Heart left ventricle (tissue), 16 donors: ENCODE measurements at regions of chr10 and their contacts with region 1.

Region 1: DNA sequence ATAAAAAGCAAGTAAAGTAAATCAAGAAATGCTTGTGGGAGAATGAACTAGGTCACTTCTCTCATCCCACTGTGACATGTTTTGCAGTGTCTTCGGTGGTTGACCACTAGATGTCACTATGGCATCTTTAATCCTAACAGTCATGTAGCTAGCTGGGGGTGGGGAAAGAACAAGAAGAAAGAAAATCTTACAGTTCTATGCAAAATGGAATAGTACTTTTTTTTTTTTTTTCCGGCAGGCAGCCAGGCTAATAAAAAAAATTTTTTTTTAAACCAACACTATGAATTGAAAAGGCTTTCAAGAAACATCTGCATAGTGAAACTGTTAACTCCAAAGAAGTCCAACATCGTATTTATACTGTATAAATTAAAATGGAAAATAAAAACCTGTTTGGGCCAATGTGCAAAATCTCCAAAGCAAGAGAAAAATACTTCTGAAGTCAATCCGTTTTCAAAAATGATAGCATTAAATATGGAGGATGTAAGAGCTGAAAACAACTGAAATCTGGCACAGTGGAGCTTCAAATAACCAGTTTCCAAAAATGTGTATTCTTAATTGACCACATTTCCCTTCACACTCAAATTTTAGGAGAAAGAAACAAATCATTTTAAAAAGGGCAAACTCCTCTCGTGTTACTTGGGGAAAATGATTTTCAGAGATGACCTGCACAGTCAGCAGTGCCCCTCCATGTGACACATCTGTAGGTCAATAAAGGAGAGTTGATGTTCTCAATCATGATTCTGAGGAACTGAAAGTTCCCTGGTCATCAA is 38.5 kb downstream of the CDK1 start:
- DNase-seq: peak in 2 of 5 donors; percentile 46 to 69
- ATAC-seq: peak; percentile 91 to 93 (median 92)
- H3K4me3 ChIP-seq: peak overlapping the region in 4 of 12 donors; percentile 2 to 14 (median 7)
- H3K27ac ChIP-seq: peak overlapping the region in 5 of 12 donors; percentile 28 to 67 (median 37)
- H3K4me1 ChIP-seq: peaks cover 0 to 36% (median 11%) of the 10 kb centered on the region in 12 donors
- H3K27me3 ChIP-seq: no peaks in the 10 kb centered on the region
- CTCF ChIP-seq: peak; percentile 64 to 87 (median 82)
- POLR2A ChIP-seq: no peak

Region 2: DNA sequence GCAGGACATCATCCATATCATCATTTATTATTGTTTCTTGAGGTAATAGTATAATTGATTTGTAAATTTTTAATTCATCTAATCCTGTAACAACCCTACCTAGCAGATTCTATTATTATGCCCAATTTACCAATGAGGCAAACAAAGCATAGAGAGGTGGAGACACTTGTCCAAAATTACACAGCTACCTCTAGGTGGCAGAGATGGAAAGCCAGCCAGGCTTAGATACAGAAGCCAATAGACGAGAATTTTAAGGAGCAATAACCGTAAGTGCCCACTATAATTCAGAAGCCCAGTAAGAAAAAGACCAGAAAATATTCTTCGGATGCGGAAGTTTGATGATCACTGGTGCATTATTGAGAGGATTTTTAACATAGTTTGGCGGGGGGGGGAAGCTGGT is 481.1 kb before region 1 on chr10:
- intact Hi-C with region 1: no loop called
- DNase-seq: no peak
- ATAC-seq: no peak
- H3K4me3 ChIP-seq: no peak overlapping the region
- H3K27ac ChIP-seq: no peak overlapping the region
- H3K4me1 ChIP-seq: no peaks in the 10 kb centered on the region
- H3K27me3 ChIP-seq: no peaks in the 10 kb centered on the region
- CTCF ChIP-seq: peak in 1 of 12 donors; percentile 8
- POLR2A ChIP-seq: no peak

Region 3: GRCh38 chr10:60497364-60497763 is 319.4 kb before region 1 on chr10:
- intact Hi-C with region 1: no loop called
- DNase-seq: no peak
- ATAC-seq: no peak
- H3K4me3 ChIP-seq: no peak overlapping the region
- H3K27ac ChIP-seq: no peak overlapping the region
- H3K4me1 ChIP-seq: peaks cover 0 to 11% (median 0%) of the 10 kb centered on the region in 12 donors
- H3K27me3 ChIP-seq: no peaks in the 10 kb centered on the region
- CTCF ChIP-seq: no peak
- POLR2A ChIP-seq: no peak

Region 4: DNA sequence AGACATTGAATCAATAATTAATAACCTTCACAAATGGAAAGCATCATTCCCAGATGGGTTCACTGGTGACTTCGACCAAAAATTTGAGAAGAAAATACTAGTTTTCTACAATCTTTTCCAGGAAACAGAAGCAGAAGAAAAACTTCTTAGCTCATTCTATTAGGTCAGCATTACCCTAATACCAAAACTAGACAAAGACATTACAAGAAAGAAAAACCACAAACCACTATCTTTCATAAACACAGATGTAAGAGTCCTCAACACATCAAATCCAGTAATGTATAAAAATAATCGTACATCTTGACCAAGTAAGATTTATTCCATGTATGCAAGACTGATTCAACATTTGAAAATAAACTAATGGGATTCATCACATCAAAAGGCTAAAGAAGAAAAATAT is 102.6 kb before region 1 on chr10:
- intact Hi-C with region 1: no loop called
- DNase-seq: no peak
- ATAC-seq: no peak
- H3K4me3 ChIP-seq: no peak overlapping the region
- H3K27ac ChIP-seq: peak overlapping the region in 1 of 12 donors; percentile 53
- H3K4me1 ChIP-seq: no peaks in the 10 kb centered on the region
- H3K27me3 ChIP-seq: no peaks in the 10 kb centered on the region
- CTCF ChIP-seq: no peak
- POLR2A ChIP-seq: no peak

Region 5: DNA sequence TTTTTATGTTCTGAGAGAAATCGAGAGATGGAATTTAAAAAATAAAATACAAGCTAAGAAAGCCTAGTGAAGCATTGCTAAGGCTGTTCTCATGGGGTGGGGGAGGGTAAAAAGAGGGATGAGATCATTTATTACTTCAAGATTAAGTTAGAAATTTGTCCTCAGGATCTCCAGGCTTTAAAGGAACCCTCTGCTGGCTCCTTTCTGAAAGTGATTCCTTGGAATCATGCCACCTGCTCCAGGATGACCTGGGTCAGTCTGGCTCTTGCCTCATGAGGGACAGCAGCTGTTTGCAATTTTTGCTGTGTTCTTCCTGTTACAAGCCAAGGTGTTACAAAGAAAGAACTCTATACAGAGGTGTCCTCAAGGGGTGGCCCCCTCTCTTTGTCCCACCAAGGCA is 31.3 kb after region 1 on chr10:
- intact Hi-C with region 1: no loop called
- DNase-seq: peak in 4 of 5 donors; percentile 51 to 61 (median 54)
- ATAC-seq: peak; percentile 35 to 86 (median 73)
- H3K4me3 ChIP-seq: no peak overlapping the region
- H3K27ac ChIP-seq: peak overlapping the region in 9 of 12 donors; percentile 36 to 80 (median 59)
- H3K4me1 ChIP-seq: peaks cover 0 to 38% (median 17%) of the 10 kb centered on the region in 12 donors
- H3K27me3 ChIP-seq: no peaks in the 10 kb centered on the region
- CTCF ChIP-seq: peak in 4 of 12 donors; percentile 7 to 41 (median 24)
- POLR2A ChIP-seq: no peak

Region 6: DNA sequence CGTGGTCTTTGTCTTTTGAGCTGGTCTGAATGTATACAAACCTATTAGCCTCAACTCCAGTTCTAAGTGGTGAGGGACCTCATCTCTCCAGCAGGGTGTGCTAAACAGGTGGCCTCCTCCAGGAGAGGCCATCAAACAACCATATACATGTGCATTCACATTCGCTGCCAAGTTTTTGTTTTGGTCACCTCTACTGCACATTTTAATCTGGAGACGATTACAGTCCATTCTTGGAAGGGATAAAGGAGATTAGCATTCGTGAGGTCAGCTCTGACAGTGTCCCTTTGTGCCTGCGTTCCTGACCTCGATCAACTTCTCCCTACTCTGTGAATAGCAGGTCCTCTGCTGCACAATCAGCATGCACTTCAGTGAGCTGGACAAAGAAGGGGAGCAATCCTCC is 66.4 kb after region 1 on chr10:
- intact Hi-C with region 1: loop called in 1 of 10 experiments (anchors 5 kb)
- DNase-seq: peak in 3 of 5 donors; percentile 37 to 55 (median 44)
- ATAC-seq: peak; percentile 88 to 95 (median 92)
- H3K4me3 ChIP-seq: no peak overlapping the region
- H3K27ac ChIP-seq: peak overlapping the region in 8 of 12 donors; percentile 6 to 65 (median 48)
- H3K4me1 ChIP-seq: peaks cover 0 to 19% (median 8%) of the 10 kb centered on the region in 12 donors
- H3K27me3 ChIP-seq: no peaks in the 10 kb centered on the region
- CTCF ChIP-seq: peak; percentile 16 to 75 (median 54)
- POLR2A ChIP-seq: no peak

Region 7: GRCh38 chr10:60964257-60965235 is 147.7 kb after region 1 on chr10:
- intact Hi-C with region 1: loop called (anchors 1 to 5 kb)
- DNase-seq: peak; percentile 60 to 76 (median 63)
- ATAC-seq: peak; percentile 78 to 91 (median 82)
- H3K4me3 ChIP-seq: no peak overlapping the region
- H3K27ac ChIP-seq: peak overlapping the region in 10 of 12 donors; percentile 5 to 77 (median 38)
- H3K4me1 ChIP-seq: peaks cover 0 to 22% (median 8%) of the 10 kb centered on the region in 12 donors
- H3K27me3 ChIP-seq: no peaks in the 10 kb centered on the region
- CTCF ChIP-seq: peak; percentile 76 to 93 (median 84)
- POLR2A ChIP-seq: no peak

Region 8: DNA sequence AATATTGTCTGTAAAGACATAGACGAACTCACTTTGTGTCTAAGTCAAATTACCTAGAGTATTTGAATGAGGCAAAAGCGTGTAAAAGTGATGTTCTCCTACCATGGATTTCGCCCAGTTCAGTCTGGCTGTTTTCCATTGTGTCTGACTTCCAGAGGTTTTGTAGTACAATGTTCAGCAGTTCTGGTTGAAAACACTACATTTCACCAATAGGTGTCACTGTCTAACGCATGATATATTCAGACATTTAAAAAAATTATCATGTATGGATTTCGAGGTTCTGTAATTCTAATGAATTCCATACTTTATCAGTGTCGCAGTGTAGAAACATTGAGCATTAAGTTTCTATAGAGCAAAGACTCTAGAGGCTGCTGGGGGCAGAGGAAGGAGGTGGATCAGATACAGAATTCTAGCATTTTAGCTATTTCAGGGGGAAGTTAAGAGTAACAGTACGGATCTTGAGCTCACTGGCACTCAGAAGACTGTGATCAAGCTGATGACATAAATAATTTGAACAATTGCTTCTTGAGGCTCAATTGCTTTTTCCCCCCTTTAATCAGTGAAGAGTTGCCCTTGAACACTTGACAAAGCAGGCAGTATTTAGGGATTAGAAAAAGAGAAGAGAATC is 324.1 kb after region 1 on chr10:
- intact Hi-C with region 1: loop called in 3 of 10 experiments (anchors 2 to 10 kb)
- DNase-seq: peak in 2 of 5 donors; percentile 28 to 33
- ATAC-seq: peak; percentile 37 to 75 (median 66)
- H3K4me3 ChIP-seq: no peak overlapping the region
- H3K27ac ChIP-seq: no peak overlapping the region
- H3K4me1 ChIP-seq: peaks cover 0 to 18% (median 2%) of the 10 kb centered on the region in 12 donors
- H3K27me3 ChIP-seq: no peaks in the 10 kb centered on the region
- CTCF ChIP-seq: peak; percentile 59 to 83 (median 76)
- POLR2A ChIP-seq: no peak

Region 9: DNA sequence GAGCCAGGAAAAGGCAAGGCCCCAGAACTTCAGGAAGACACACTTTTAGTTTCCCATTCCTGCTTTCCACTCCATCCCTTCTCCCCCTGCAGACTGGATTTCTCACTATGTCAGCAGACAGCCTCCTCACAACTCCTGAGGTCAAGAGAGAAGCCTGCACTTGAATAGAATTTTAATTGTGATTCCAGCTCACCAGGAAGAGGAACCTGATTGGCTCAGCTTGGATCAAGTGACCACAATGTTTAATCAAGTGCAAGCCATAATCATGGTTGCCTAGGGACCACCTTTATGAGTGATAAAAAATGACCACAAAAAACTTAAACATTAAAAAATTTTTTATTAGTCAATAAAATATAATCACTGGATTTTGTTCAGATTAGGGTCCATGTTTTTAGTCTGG is 371.9 kb after region 1 on chr10:
- intact Hi-C with region 1: loop called in 2 of 10 experiments (anchors 5 kb)
- DNase-seq: no peak
- ATAC-seq: no peak
- H3K4me3 ChIP-seq: no peak overlapping the region
- H3K27ac ChIP-seq: no peak overlapping the region
- H3K4me1 ChIP-seq: peaks cover 0 to 9% (median 0%) of the 10 kb centered on the region in 12 donors
- H3K27me3 ChIP-seq: no peaks in the 10 kb centered on the region
- CTCF ChIP-seq: no peak
- POLR2A ChIP-seq: no peak

Region 10: GRCh38 chr10:61733358-61733940 is 916.6 kb after region 1 on chr10:
- intact Hi-C with region 1: loop called in 9 of 10 experiments (anchors 5 to 10 kb)
- DNase-seq: peak in 1 of 5 donors; percentile 10
- ATAC-seq: no peak
- H3K4me3 ChIP-seq: no peak overlapping the region
- H3K27ac ChIP-seq: no peak overlapping the region
- H3K4me1 ChIP-seq: no peaks in the 10 kb centered on the region
- H3K27me3 ChIP-seq: no peaks in the 10 kb centered on the region
- CTCF ChIP-seq: peak; percentile 38 to 68 (median 56)
- POLR2A ChIP-seq: no peak